BJ (cell line): ENCODE measurements at regions of chr18 and their contacts with region 1.

Region 1: DNA sequence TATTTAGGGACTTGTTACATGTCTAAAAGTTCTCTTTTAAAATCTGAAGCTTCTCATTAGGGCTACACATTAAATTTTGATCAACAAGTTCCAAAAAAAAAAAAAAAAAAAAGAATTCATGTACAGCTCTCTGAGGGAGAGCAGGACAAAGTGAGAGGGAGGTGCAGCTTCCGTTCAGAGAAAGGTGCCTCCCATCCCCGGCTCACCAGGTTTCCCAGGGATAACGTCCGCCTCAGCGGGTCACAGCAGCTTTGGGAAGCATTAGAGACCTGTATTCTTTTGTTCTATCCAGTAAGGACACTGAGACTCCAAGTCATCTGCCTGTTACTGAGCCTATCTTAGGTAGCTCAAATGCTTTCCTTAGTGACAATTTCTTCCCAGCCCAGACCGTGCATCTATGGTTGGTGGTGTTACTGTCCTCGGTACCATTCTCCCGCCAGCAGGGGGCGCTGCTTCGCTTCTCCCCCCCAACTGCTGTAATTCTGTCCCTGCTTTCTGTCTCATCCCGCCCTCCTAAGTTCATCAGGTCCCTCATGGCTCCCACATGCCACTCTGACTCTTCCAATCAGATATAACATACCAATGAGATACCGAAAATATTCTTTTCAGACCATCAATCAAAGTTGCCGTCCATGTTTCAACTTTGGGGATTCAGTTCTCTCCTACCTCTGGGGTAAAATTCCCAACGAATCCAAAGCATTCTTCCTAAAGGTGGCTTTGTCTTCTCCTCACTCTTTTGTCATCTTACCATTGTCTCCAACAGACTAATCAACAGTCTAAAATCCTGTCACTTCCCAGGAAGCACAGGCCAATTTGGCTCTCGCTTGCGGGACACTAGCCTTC is 466.5 kb downstream of the METTL4 start:
- DNase-seq: no peak
- H3K4me3 ChIP-seq: no peak overlapping the region
- H3K27me3 ChIP-seq: no peaks in the 10 kb centered on the region
- CTCF ChIP-seq: peak; percentile 83

Region 2: DNA sequence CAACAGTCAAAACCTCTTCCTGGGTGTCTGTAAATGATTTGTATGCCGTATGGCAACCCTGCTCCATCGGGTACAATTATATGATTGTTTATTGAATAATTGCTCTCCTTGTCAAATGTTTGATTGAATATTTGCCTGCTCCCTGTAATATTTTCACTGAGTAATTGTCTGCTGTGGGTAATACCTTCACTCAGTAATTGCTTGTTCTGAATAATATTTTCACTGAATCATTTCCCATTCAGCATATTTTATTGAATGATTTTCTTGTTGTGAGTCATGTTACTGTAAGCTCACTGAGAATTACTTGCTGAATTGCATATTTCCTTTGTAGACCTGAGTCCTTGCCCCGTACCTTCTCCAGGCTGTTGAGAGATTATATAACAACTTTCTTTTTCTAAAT is 68.8 kb before region 1 on chr18:
- CTCF ChIA-PET with region 1: no interaction called
- POLR2A ChIA-PET with region 1: no interaction called
- DNase-seq: no peak
- H3K4me3 ChIP-seq: no peak overlapping the region
- H3K27me3 ChIP-seq: no peaks in the 10 kb centered on the region
- CTCF ChIP-seq: no peak

Region 3: DNA sequence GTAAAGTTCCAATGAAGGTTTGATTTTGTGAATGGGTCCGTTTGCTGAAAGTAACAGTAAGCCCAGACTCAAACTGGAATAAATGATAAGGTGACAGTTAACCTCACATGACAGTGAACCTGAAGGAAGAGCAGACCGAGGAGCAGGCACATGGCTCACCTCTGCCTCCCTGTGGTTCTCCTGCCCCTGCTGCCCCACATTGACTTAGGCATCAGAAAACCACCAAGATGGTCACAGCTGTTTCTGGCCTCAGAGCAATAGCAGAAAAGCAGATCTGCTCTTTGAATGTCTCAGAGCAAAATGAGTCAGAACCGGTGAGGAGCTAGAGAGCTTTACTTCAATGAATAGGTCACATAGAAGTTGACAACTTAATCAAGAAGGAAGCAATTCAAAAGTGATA is 21.1 kb before region 1 on chr18:
- CTCF ChIA-PET with region 1: interaction called, 10 read pairs
- POLR2A ChIA-PET with region 1: no interaction called
- DNase-seq: no peak
- H3K4me3 ChIP-seq: no peak overlapping the region
- H3K27me3 ChIP-seq: no peaks in the 10 kb centered on the region
- CTCF ChIP-seq: no peak

Region 4: GRCh38 chr18:2121221-2121620 is 16.4 kb after region 1 on chr18:
- CTCF ChIA-PET with region 1: interaction called, 15 read pairs
- POLR2A ChIA-PET with region 1: no interaction called
- DNase-seq: no peak
- H3K4me3 ChIP-seq: no peak overlapping the region
- H3K27me3 ChIP-seq: 0 out of 2 replicates have a peak, but pooled peaks cover 1% of the 10 kb centered on the region
- CTCF ChIP-seq: no peak

Region 5: GRCh38 chr18:2223849-2224248 is 119.0 kb after region 1 on chr18:
- CTCF ChIA-PET with region 1: interaction called, 73 read pairs
- POLR2A ChIA-PET with region 1: no interaction called
- DNase-seq: no peak
- H3K4me3 ChIP-seq: no peak overlapping the region
- H3K27me3 ChIP-seq: no peaks in the 10 kb centered on the region
- CTCF ChIP-seq: peak; percentile 58

Region 6: DNA sequence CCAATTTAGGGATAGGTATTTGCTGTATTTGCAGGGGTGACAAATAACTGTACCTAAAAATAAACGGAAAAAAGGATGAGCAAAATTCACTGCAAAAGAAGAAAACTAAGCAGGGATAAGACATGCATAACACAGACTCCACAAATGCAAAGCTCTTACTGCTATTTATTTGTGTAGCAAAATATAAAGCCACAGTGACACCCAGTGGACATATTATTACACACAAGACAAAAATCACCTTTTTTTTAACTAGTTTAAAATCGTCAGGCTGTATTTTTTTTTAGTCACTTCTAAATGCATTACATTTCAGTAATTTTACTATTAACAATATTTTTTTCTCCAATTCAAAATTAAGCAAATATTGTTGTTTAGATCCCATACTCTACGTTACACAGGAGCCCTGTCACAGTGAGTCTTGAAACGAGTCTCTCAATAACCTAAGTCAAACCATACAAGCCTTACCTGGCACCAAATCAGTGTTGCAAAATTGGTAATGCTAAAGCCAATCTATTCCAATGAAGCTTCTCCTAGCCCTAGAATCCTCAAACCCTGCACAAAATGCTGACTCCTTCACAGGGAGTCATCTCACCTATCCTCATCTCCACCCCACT is 442.7 kb after region 1 on chr18:
- CTCF ChIA-PET with region 1: interaction called, 103 read pairs
- POLR2A ChIA-PET with region 1: no interaction called
- DNase-seq: no peak
- H3K4me3 ChIP-seq: no peak overlapping the region
- H3K27me3 ChIP-seq: no peaks in the 10 kb centered on the region
- CTCF ChIP-seq: peak; percentile 38